ENCODE measurements at regions of chrX and their contacts with region 1.

Region 1: GRCh38 chrX:14029425-14030173 is at the start of gene GEMIN8:
- DNase-seq: peak; percentile 74
- H3K4me3 ChIP-seq: peak within 1 kb of the TSS; percentile 50 to 54
- H3K27ac ChIP-seq: peak within 1 kb of the TSS; percentile 70 to 74
- H3K4me1 ChIP-seq: no peaks in the 10 kb centered on the region
- H3K27me3 ChIP-seq: no peaks in the 10 kb centered on the region
- CTCF ChIP-seq: no peak
- POLR2A ChIP-seq: peak; percentile 54
- total RNA-seq, gene GEMIN8: 11.4 to 13.4 TPM

Region 2: GRCh38 chrX:13506574-13506973 is 523.0 kb before region 1 on chrX:
- intact Hi-C with region 1: loop called (anchors 10 kb)
- DNase-seq: no peak
- H3K4me3 ChIP-seq: no peak overlapping the region
- H3K27ac ChIP-seq: no peak overlapping the region
- H3K4me1 ChIP-seq: no peaks in the 10 kb centered on the region
- H3K27me3 ChIP-seq: no peaks in the 10 kb centered on the region
- CTCF ChIP-seq: peak; percentile 32 to 71 (median 58)
- POLR2A ChIP-seq: no peak

Region 3: GRCh38 chrX:13658602-13659001 is 371.0 kb before region 1 on chrX:
- intact Hi-C with region 1: loop called (anchors 5 kb)
- DNase-seq: peak; percentile 31
- H3K4me3 ChIP-seq: no peak overlapping the region
- H3K27ac ChIP-seq: no peak overlapping the region
- H3K4me1 ChIP-seq: no peaks in the 10 kb centered on the region
- H3K27me3 ChIP-seq: no peaks in the 10 kb centered on the region
- CTCF ChIP-seq: peak; percentile 35 to 81 (median 61)
- POLR2A ChIP-seq: no peak

Region 4: DNA sequence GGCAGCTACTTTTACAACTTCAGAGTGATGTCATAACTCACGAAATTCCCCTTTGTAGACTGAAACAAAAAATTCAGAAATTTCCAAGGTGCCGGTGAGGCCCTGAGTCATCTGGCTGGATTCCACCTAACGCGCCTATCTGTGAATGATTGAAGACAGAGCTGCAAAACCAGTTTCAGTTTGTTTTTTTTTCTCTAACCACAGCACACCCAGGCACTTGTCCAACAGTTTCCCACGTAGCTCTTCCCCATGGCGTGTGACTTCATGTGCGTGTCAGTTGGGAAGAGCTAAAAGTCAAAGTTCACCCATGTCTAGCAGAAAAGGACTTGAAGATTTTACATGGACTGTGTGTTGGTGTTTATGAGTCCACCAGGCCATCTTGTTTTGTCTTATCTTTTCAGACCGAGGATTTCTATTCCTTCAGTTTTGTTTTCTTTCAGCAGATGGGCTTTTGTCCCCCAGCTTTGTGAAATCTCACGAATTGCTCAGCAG is 360.3 kb before region 1 on chrX:
- intact Hi-C with region 1: loop called (anchors 5 kb)
- DNase-seq: peak; percentile 80
- H3K4me3 ChIP-seq: no peak overlapping the region
- H3K27ac ChIP-seq: peak overlapping the region; percentile 61 to 64
- H3K4me1 ChIP-seq: no peaks in the 10 kb centered on the region
- H3K27me3 ChIP-seq: no peaks in the 10 kb centered on the region
- CTCF ChIP-seq: no peak
- POLR2A ChIP-seq: no peak

Region 5: DNA sequence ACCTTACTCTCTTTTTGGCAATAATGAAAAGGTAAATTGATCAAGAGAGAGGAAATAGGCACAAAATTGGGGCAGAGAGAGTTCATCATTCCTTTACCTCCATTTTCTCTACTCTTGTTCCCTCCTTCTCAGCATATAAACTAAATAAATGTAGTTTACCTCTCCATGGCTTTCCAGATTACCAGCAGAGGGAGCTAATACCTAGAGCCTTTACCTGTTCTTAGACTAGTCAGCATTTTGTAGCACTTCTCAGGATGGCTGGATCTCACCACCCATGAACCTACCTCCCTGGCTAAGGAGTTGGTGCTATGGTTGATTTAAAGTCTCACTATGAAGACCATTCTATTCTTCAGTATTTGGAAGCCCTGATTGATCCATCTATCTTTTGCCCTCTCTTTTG is 279.4 kb before region 1 on chrX:
- intact Hi-C with region 1: loop called (anchors 5 kb)
- DNase-seq: peak; percentile 39
- H3K4me3 ChIP-seq: no peak overlapping the region
- H3K27ac ChIP-seq: peak overlapping the region in 1 of 2 donors; percentile 48
- H3K4me1 ChIP-seq: no peaks in the 10 kb centered on the region
- H3K27me3 ChIP-seq: no peaks in the 10 kb centered on the region
- CTCF ChIP-seq: peak; percentile 19 to 72 (median 48)
- POLR2A ChIP-seq: no peak

Measured in prostate gland (tissue), 2 donors.